Cardiac septum (tissue), 1 donor: ENCODE measurements at regions of chr5 and their contacts with region 1.

Region 1: GRCh38 chr5:147628058-147628895 is 118.4 kb upstream of the DPYSL3 start:
- DNase-seq: no peak

Region 2: GRCh38 chr5:147483961-147484707 is 144.1 kb before region 1 on chr5:
- intact Hi-C with region 1: no loop called
- DNase-seq: no peak

Region 3: DNA sequence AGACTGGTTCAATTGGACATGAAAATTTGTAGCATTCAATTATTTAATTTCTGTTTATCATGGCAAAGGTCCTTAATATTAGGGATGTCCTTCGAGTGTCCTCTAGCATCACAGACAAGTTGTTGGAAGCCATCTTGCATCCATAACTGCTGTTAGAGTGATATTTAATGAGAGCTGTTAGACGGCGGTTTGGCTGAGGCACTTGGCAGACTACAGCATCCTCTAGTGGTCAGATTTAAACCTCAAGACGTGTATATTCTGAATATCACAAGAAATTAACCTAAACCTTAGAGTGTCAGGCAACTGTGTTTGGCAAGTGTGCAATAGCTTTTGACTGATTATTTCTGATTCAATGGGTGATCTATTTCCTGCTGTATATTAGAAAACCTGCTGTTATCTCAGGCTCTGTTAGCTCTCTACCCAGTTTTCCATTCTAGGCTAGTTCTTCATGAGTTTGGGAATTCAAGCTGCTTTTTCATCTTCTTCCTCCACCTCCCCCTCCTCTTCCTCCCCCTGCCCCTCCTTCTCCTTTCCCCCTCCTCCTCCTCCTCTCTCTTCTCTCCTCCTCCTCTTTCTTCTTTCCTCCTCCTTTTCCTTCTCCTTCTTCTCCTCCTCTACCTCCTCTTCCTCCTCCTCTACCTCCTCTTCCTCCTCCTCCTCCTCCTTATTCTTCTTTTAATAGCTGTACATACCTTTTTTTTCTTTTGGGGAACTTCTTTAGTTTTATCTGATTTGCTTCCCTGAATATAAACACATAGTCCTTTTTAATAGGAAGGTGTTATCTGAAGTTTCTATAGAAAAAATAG is 194.6 kb after region 1 on chr5:
- intact Hi-C with region 1: loop called (anchors 1 kb)
- DNase-seq: no peak

Region 4: GRCh38 chr5:148125641-148126040 is 497.4 kb after region 1 on chr5:
- intact Hi-C with region 1: no loop called
- DNase-seq: no peak